CD8-positive, alpha-beta T cell (primary cell): ENCODE measurements at regions of chr12 and their contacts with region 1.

Region 1: DNA sequence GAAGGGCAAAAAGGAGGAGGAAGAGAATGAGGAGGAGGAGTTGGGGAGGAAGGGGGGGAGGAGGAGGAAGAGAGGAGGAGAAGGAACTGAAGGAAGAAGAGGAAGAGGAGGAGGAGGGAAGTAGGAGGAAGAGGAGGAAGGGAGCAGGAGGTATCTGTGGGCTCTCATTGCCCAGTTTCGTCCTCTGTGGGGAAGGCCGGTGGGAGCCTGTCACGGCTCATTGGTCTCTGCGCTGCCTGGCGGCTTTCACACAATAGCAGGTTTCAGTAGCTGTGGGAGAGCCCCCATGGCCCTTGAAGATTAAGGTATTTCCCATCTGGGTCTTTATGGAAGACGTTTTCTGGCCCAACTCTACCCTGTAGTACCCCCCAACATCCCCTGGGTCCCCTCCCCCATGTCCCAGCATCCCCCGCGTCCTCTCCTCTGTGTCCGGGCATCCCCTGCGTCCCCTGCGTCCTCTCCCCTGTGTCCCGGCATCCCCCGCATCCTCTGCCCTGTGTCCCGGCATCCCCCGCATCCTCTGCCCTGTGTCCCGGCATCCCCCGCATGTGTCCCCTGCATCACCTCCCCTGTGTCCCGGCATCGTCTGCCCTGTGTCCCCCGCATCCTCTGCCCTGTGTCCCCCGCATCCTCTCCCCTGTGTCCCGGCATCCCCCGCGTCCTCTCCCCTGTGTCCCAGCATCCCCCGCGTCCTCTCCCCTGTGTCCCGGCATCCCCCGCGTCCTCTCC is 278.2 kb upstream of the SFSWAP start:
- DNase-seq: no peak
- ATAC-seq: no peak
- H3K4me3 ChIP-seq: no peak overlapping the region
- H3K4me3 Mint-ChIP-seq: no peak overlapping the region
- H3K27ac ChIP-seq: no peak overlapping the region
- H3K27ac Mint-ChIP-seq: no peak overlapping the region
- H3K4me1 ChIP-seq: no peaks in the 10 kb centered on the region
- H3K4me1 Mint-ChIP-seq: no peaks in the 10 kb centered on the region
- H3K27me3 ChIP-seq: no peaks in the 10 kb centered on the region
- H3K27me3 Mint-ChIP-seq: peaks cover 28% of the 10 kb centered on the region
- CTCF ChIP-seq: no peak

Region 2: GRCh38 chr12:131012279-131013069 is 420.2 kb before region 1 on chr12:
- CTCF ChIA-PET with region 1: no interaction called
- POLR2A ChIA-PET with region 1: no interaction called
- intact Hi-C with region 1: no loop called
- DNase-seq: no peak
- ATAC-seq: no peak
- H3K4me3 ChIP-seq: no peak overlapping the region
- H3K4me3 Mint-ChIP-seq: no peak overlapping the region
- H3K27ac ChIP-seq: no peak overlapping the region
- H3K27ac Mint-ChIP-seq: no peak overlapping the region
- H3K4me1 ChIP-seq: no peaks in the 10 kb centered on the region
- H3K4me1 Mint-ChIP-seq: no peaks in the 10 kb centered on the region
- H3K27me3 ChIP-seq: no peaks in the 10 kb centered on the region
- H3K27me3 Mint-ChIP-seq: peaks cover 1% of the 10 kb centered on the region
- CTCF ChIP-seq: no peak

Region 3: DNA sequence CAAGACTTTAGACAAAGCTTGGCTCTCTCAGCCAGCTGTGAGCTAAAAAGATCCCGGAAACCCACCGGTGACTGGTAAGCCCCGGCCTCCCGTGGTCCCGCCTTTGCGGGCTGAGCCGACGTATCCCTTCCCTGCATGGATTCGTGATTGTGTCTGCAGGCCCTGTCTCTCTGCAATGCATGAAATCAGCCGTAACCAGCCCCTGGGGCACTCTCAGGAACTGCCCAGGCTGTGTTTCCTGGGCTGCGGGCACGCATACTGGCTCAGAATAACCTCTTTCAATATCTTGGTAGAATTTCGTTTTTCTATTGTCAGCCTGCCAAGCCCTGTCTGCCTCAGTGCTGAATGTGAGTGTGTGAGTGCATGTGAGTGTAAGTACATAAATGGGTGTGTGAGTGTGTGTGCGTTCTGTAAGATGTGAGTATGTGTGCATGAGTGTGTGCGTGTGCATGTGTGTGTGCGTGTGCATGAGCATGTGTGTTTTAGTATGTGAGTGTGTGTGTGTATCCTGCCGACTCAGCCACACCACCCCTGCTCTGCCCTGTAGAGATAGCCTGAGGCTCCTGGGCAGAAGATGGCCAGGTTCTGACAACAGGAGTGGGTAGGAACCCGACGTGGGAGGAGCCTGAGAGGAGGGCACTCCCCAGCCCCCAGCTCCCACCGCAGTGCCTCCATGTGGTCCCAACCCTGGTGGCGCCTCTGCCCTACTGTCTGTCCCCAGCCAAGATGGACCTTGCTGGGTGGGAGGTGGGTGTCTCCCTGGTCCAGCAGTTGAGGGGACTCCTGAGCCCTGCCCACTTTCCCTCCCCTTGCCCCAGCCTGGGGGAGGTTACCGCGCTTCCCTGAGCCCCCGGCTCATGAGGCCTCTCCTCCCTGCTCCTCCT is 210.2 kb before region 1 on chr12:
- CTCF ChIA-PET with region 1: no interaction called
- POLR2A ChIA-PET with region 1: no interaction called
- intact Hi-C with region 1: loop called in 1 of 2 experiments (anchors 10 kb)
- DNase-seq: no peak
- ATAC-seq: no peak
- H3K4me3 ChIP-seq: no peak overlapping the region
- H3K4me3 Mint-ChIP-seq: peak overlapping the region; percentile 61
- H3K27ac ChIP-seq: no peak overlapping the region
- H3K27ac Mint-ChIP-seq: no peak overlapping the region
- H3K4me1 ChIP-seq: no peaks in the 10 kb centered on the region
- H3K4me1 Mint-ChIP-seq: peaks cover 7% of the 10 kb centered on the region
- H3K27me3 ChIP-seq: peaks cover 0 to 5% of the 10 kb centered on the region in 2 experiments
- H3K27me3 Mint-ChIP-seq: peaks cover 11% of the 10 kb centered on the region
- CTCF ChIP-seq: no peak

Region 4: GRCh38 chr12:131458931-131459772 is 26.5 kb after region 1 on chr12:
- CTCF ChIA-PET with region 1: no interaction called
- POLR2A ChIA-PET with region 1: no interaction called
- intact Hi-C with region 1: no loop called
- DNase-seq: peak in 1 of 9 experiments; percentile 34
- ATAC-seq: no peak
- H3K4me3 ChIP-seq: no peak overlapping the region
- H3K4me3 Mint-ChIP-seq: no peak overlapping the region
- H3K27ac ChIP-seq: no peak overlapping the region
- H3K27ac Mint-ChIP-seq: no peak overlapping the region
- H3K4me1 ChIP-seq: no peaks in the 10 kb centered on the region
- H3K4me1 Mint-ChIP-seq: no peaks in the 10 kb centered on the region
- H3K27me3 ChIP-seq: no peaks in the 10 kb centered on the region
- H3K27me3 Mint-ChIP-seq: peaks cover 19% of the 10 kb centered on the region
- CTCF ChIP-seq: no peak